ENCODE measurements at regions of chr11 and their contacts with region 1.

Region 1: GRCh38 chr11:32176223-32176934 is 85.5 kb downstream of the RCN1 start:
- DNase-seq: peak; percentile 88
- H3K4me3 ChIP-seq: no peak overlapping the region
- H3K27ac ChIP-seq: no peak overlapping the region
- H3K4me1 ChIP-seq: no peaks in the 10 kb centered on the region
- H3K27me3 ChIP-seq: peaks cover 14 to 16% of the 10 kb centered on the region in 2 experiments
- CTCF ChIP-seq: peak; percentile 79 to 83
- POLR2A ChIP-seq: no peak

Region 2: GRCh38 chr11:31107062-31107461 is 1069.3 kb before region 1 on chr11:
- CTCF ChIA-PET with region 1: interaction called, 9 read pairs
- POLR2A ChIA-PET with region 1: no interaction called
- dilution Hi-C with region 1: no loop called
- intact Hi-C with region 1: loop called (anchors 10 kb)
- DNase-seq: peak; percentile 44
- H3K4me3 ChIP-seq: no peak overlapping the region
- H3K27ac ChIP-seq: no peak overlapping the region
- H3K4me1 ChIP-seq: no peaks in the 10 kb centered on the region
- H3K27me3 ChIP-seq: no peaks in the 10 kb centered on the region
- CTCF ChIP-seq: peak; percentile 20 to 53
- POLR2A ChIP-seq: no peak

Region 3: DNA sequence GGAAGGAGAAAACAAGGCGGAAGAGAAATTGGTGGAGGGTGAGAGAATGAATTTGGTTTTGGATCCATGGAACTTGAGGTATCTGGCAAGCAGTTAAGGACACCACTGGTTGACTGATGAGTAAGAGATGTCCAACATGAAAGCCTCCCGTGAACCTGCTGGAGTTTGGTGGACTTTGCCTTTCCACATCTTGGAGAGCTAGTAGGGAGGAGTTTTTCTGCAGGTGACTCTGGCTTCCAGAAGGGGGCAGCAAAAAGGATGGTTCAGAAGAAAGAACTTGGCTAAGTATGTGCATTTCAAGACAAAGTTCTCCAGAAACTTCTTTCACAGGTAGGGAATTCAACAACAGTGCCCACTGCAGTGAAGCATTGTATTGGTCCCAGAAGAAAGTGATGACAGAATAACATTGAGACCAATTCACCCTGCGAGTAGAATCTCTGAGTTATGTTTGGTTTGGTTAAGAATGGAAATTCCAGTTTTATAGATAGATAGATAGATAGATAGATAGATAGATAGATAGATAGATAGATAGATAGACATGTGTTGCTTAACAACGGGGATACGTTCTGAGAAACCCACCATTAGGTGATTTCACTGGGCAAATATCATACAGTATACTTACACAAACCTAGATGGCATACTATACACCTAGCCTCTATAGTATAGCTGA is 835.3 kb before region 1 on chr11:
- CTCF ChIA-PET with region 1: interaction called, 25 read pairs
- POLR2A ChIA-PET with region 1: no interaction called
- dilution Hi-C with region 1: no loop called
- intact Hi-C with region 1: loop called (anchors 2 kb)
- DNase-seq: peak; percentile 43
- H3K4me3 ChIP-seq: no peak overlapping the region
- H3K27ac ChIP-seq: no peak overlapping the region
- H3K4me1 ChIP-seq: no peaks in the 10 kb centered on the region
- H3K27me3 ChIP-seq: peaks cover 3 to 4% of the 10 kb centered on the region in 2 experiments
- CTCF ChIP-seq: peak; percentile 49 to 70
- POLR2A ChIP-seq: no peak

Region 4: GRCh38 chr11:31487848-31488247 is 688.5 kb before region 1 on chr11:
- CTCF ChIA-PET with region 1: interaction called, 9 read pairs
- POLR2A ChIA-PET with region 1: no interaction called
- dilution Hi-C with region 1: no loop called
- intact Hi-C with region 1: loop called (anchors 2 kb)
- DNase-seq: peak; percentile 74
- H3K4me3 ChIP-seq: no peak overlapping the region
- H3K27ac ChIP-seq: no peak overlapping the region
- H3K4me1 ChIP-seq: no peaks in the 10 kb centered on the region
- H3K27me3 ChIP-seq: no peaks in the 10 kb centered on the region
- CTCF ChIP-seq: peak; percentile 24 to 28
- POLR2A ChIP-seq: no peak

Region 5: DNA sequence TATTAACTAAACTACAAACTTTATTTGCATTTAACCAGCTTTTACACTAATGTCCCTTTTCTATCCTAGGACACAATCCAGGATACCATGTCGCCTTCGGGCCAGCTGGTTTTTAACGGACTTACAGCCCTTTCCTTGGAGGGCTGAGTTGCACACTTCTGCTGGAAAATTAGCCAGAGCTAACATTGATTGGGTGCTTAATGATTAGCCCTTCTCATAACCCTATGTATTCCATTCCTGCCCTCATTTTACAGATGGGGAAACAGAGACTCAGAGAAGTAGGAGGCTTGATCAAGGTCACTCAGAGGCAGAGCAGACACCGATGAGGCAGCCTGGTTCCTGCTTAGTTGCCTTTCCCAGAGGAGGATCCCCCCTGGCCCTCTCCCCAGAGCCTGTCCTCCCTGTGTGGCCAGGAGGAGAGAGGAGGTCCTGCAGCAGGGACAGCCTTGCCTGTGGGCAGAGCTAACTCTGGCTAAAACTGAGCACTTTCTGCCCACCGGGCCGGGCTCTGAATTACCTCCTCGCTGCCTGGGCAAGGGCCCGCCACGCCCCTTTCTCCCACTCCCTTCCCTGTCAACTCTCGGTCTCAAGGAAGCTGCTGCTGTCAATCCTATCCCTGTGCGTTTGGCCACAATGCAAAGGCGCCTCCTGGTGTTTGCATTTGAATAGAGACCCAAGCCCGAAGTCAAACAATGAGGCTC is 305.6 kb before region 1 on chr11:
- CTCF ChIA-PET with region 1: interaction called, 12 read pairs
- POLR2A ChIA-PET with region 1: no interaction called
- dilution Hi-C with region 1: no loop called
- intact Hi-C with region 1: loop called (anchors 5 kb)
- DNase-seq: peak; percentile 62
- H3K4me3 ChIP-seq: no peak overlapping the region
- H3K27ac ChIP-seq: no peak overlapping the region
- H3K4me1 ChIP-seq: no peaks in the 10 kb centered on the region
- H3K27me3 ChIP-seq: peaks cover 4 to 12% of the 10 kb centered on the region in 2 experiments
- CTCF ChIP-seq: peak; percentile 43 to 76
- POLR2A ChIP-seq: no peak

Region 6: DNA sequence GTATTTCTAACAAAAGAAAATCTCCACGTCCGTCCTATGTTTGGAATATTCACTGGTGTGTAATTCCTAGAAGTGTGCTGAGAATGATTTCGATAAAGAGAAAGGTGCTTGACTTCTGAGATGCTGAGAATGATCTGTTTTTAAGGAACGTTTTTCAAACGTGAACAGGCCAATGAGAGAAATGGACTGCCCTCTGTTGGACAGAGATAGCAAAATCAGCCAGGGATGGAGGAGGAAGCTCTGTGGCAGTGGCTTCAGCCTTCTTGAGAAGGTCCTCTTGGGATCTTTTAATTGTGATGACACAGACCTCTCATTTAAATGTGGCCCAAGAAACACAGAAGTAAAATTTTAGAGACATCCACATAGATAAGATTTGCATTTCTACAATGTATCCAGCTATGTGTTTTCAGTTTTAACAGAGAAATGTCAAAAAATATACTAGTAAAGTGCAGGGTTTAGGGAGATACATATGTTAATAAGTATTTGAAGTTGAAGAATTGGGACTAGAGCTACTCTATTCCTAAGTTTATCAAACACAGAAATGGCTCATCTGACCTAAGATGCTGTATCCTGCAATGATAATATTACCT is 169.5 kb before region 1 on chr11:
- CTCF ChIA-PET with region 1: interaction called, 36 read pairs
- POLR2A ChIA-PET with region 1: no interaction called
- dilution Hi-C with region 1: no loop called
- intact Hi-C with region 1: loop called (anchors 1 kb)
- DNase-seq: peak; percentile 45
- H3K4me3 ChIP-seq: no peak overlapping the region
- H3K27ac ChIP-seq: no peak overlapping the region
- H3K4me1 ChIP-seq: no peaks in the 10 kb centered on the region
- H3K27me3 ChIP-seq: peaks cover 3 to 4% of the 10 kb centered on the region in 2 experiments
- CTCF ChIP-seq: peak; percentile 59 to 66
- POLR2A ChIP-seq: no peak

Region 7: GRCh38 chr11:32039149-32039548 is 137.2 kb before region 1 on chr11:
- CTCF ChIA-PET with region 1: interaction called, 10 read pairs
- POLR2A ChIA-PET with region 1: no interaction called
- dilution Hi-C with region 1: loop called (anchors 25 kb)
- intact Hi-C with region 1: no loop called
- DNase-seq: no peak
- H3K4me3 ChIP-seq: no peak overlapping the region
- H3K27ac ChIP-seq: no peak overlapping the region
- H3K4me1 ChIP-seq: no peaks in the 10 kb centered on the region
- H3K27me3 ChIP-seq: peaks cover 0 to 3% of the 10 kb centered on the region in 2 experiments
- CTCF ChIP-seq: no peak
- POLR2A ChIP-seq: no peak

Region 8: GRCh38 chr11:32266601-32267000 is 90.2 kb after region 1 on chr11:
- CTCF ChIA-PET with region 1: no interaction called
- POLR2A ChIA-PET with region 1: no interaction called
- dilution Hi-C with region 1: no loop called
- intact Hi-C with region 1: no loop called
- DNase-seq: no peak
- H3K4me3 ChIP-seq: no peak overlapping the region
- H3K27ac ChIP-seq: no peak overlapping the region
- H3K4me1 ChIP-seq: no peaks in the 10 kb centered on the region
- H3K27me3 ChIP-seq: no peaks in the 10 kb centered on the region
- CTCF ChIP-seq: no peak
- POLR2A ChIP-seq: no peak

Region 9: DNA sequence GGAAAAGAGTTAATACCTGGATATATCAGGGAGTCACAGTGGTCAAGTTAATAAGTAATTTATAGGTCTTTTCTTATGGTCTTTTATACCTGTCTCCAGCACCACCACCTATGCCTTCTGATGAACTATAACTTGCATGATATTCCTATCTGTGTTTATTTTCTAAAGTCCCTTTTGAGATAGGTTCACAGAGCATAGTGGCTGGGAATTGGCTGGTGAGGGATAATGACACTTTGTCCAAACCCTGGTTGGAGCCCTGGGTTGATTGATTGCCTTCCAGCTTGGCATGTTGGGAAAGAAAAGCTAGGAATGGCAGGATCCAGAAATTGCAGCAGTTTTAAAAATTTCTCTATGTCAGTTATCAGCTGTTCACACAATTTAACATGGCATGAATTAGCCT is 1104.0 kb after region 1 on chr11:
- CTCF ChIA-PET with region 1: no interaction called
- POLR2A ChIA-PET with region 1: no interaction called
- dilution Hi-C with region 1: no loop called
- intact Hi-C with region 1: no loop called
- DNase-seq: no peak
- H3K4me3 ChIP-seq: no peak overlapping the region
- H3K27ac ChIP-seq: no peak overlapping the region
- H3K4me1 ChIP-seq: no peaks in the 10 kb centered on the region
- H3K27me3 ChIP-seq: no peaks in the 10 kb centered on the region
- CTCF ChIP-seq: no peak
- POLR2A ChIP-seq: no peak